ENCODE measurements at regions of chr19 and their contacts with region 1.

Region 1: DNA sequence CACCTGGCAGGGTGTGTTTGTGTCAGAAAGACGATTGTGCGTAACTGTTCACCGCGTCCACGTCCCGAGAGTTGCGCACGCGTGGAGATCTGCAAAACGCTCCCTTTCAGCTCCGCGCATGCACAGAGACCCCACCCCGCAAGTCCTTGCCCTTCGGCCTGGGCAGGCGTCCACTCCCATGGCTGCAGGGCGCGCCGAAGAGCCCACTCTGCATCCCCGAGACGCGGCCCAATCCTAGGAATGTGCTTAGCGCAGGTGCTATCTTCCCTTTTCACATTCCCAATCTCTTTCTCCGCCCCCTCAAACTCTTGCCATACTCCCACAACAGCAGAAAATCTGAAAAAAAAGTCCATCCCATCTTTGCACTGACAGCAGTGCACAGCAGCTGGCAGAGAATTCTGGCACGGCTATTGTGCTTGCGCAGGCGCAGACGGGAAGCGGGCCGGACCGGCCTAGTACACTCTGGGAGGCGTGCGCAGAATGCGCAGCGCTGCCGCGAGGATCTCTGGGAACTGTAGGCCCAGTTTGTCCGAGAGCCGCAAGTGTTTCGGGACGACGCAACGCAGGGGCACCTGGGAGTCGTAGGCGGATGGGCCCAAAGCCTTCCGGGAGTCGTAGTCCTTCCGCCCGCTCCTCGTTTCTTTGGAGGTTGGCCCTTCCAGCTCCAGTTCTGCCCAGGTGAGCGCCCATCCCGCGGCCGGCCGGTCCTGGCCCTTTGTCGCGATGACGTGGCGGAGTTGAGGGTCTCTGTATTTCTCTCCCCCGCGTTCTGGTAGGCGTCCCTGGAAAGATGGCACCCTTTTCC is 23.1 kb downstream of the ZNF175 start:
- DNase-seq: peak; percentile 97
- ATAC-seq: peak; percentile 100
- H3K4me3 ChIP-seq: peak overlapping the region; percentile 66
- H3K27ac ChIP-seq: peak overlapping the region; percentile 48
- H3K4me1 ChIP-seq: peaks cover 3% of the 10 kb centered on the region; the same call in 1 of the 2 replicates
- H3K27me3 ChIP-seq: no peaks in the 10 kb centered on the region
- CTCF ChIP-seq: no peak
- POLR2A ChIP-seq: no peak
- RAD21 ChIP-seq: no peak

Region 2: GRCh38 chr19:51570962-51571575 is 23.1 kb before region 1 on chr19 and contains the start of gene ZNF175:
- CTCF ChIA-PET with region 1: no interaction called
- POLR2A ChIA-PET with region 1: no interaction called
- dilution Hi-C with region 1: no loop called
- in situ Hi-C with region 1: no loop called
- intact Hi-C with region 1: loop called (anchors 1 kb)
- DNase-seq: peak; percentile 96
- ATAC-seq: peak; percentile 94
- H3K4me3 ChIP-seq: peak within 1 kb of the TSS; percentile 74
- H3K27ac ChIP-seq: peak within 1 kb of the TSS; percentile 78
- H3K4me1 ChIP-seq: peaks cover 12% of the 10 kb centered on the region
- H3K27me3 ChIP-seq: no peaks in the 10 kb centered on the region
- CTCF ChIP-seq: no peak
- POLR2A ChIP-seq: peak; percentile 75
- RAD21 ChIP-seq: no peak
- total RNA-seq, gene ZNF175: 6.4 and 8.4 TPM in 2 replicates

Region 3: GRCh38 chr19:51688672-51689571 is 94.8 kb after region 1 on chr19:
- CTCF ChIA-PET with region 1: no interaction called
- POLR2A ChIA-PET with region 1: interaction called, 4 read pairs
- dilution Hi-C with region 1: no loop called
- in situ Hi-C with region 1: no loop called
- intact Hi-C with region 1: loop called (anchors 1 kb)
- DNase-seq: peak; percentile 95
- ATAC-seq: peak; percentile 82
- H3K4me3 ChIP-seq: peak overlapping the region; percentile 99
- H3K27ac ChIP-seq: peak overlapping the region; percentile 99
- H3K4me1 ChIP-seq: peaks cover 16% of the 10 kb centered on the region
- H3K27me3 ChIP-seq: no peaks in the 10 kb centered on the region
- CTCF ChIP-seq: no peak; the same call in 1 of the 2 replicates
- POLR2A ChIP-seq: peak; percentile 73
- RAD21 ChIP-seq: no peak

Measured in IMR-90 (cell line).